Breast epithelium (tissue), 4 donors: ENCODE measurements at regions of chr2 and their contacts with region 1.

Region 1: DNA sequence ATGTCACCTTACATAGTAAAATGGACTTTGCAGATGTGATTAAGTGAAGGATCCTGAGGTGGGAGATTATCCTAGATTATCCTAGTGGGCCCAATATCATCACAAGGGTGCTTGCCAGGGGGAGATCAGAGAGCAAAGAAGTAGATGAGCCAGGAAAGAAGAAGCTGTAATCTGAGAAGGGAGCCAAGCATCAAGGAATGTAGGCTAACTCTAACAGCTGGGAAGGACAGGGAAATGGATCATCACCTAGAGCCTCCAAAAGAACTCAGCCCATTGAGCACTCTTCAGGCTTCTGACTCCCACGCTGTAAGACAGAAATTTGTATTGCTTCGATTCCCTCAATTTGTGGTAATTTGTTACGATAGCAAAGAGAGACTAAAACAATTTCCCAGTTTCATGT is 309.9 kb downstream of the LRP1B start:
- DNase-seq: no peak
- H3K4me3 ChIP-seq: no peak overlapping the region
- H3K27ac ChIP-seq: no peak overlapping the region
- H3K4me1 ChIP-seq: no peaks in the 10 kb centered on the region
- H3K27me3 ChIP-seq: no peaks in the 10 kb centered on the region
- CTCF ChIP-seq: no peak
- POLR2A ChIP-seq: no peak

Region 2: GRCh38 chr2:141611176-141611571 is 209.7 kb before region 1 on chr2:
- intact Hi-C with region 1: loop called (anchors 5 kb)
- DNase-seq: no peak
- H3K4me3 ChIP-seq: no peak overlapping the region
- H3K27ac ChIP-seq: no peak overlapping the region
- H3K4me1 ChIP-seq: no peaks in the 10 kb centered on the region
- H3K27me3 ChIP-seq: no peaks in the 10 kb centered on the region
- CTCF ChIP-seq: no peak
- POLR2A ChIP-seq: no peak

Region 3: GRCh38 chr2:141767051-141767450 is 53.8 kb before region 1 on chr2:
- intact Hi-C with region 1: no loop called
- DNase-seq: no peak
- H3K4me3 ChIP-seq: no peak overlapping the region
- H3K27ac ChIP-seq: no peak overlapping the region
- H3K4me1 ChIP-seq: no peaks in the 10 kb centered on the region
- H3K27me3 ChIP-seq: no peaks in the 10 kb centered on the region
- CTCF ChIP-seq: no peak
- POLR2A ChIP-seq: no peak

Region 4: GRCh38 chr2:141778315-141778835 is 42.5 kb before region 1 on chr2:
- intact Hi-C with region 1: no loop called
- DNase-seq: no peak
- H3K4me3 ChIP-seq: no peak overlapping the region
- H3K27ac ChIP-seq: no peak overlapping the region
- H3K4me1 ChIP-seq: no peaks in the 10 kb centered on the region
- H3K27me3 ChIP-seq: no peaks in the 10 kb centered on the region
- CTCF ChIP-seq: no peak
- POLR2A ChIP-seq: no peak